ENCODE measurements at regions of chr1 and their contacts with region 1.

Region 1: GRCh38 chr1:182169203-182169602 is 107.7 kb upstream of the ZNF648 start:
- DNase-seq: no peak
- H3K4me3 ChIP-seq: no peak overlapping the region
- CTCF ChIP-seq: no peak
- POLR2A ChIP-seq: no peak

Region 2: DNA sequence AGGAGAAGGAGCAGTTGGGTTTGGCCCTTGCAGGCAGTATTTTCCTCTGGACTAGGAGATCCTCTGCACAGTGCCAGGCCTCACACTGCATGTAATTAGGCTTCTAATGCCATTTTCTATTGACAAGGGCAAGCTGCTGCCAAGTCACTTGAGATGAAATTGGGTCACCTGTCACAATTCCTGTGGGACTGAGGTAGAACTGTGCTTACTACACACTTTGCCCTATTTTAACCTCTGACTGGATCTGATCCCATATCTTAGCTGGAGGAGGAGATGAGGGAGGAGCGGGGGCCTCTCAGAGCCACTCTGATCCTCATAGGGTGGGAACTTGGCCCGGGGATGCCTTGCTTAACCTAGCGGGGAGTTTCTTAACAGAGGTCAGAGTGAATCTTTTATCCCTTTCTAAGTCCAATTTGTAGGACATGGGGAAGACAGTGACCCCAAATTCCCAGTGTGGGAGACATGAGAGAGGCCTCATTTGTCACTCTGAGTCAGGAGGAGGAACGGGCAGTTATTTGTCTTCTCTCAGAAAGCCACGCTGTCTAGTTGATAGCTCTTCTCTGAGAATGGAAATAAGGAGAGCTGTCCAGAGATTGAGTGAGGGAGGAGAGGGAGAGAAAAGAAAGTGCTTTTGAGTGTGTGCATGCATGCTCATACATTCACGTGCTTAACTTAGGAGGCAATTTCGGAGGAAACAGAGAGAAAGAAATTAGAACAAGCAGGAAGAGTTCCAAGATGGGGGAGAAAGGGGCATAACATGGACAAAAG is 564.5 kb before region 1 on chr1:
- intact Hi-C with region 1: no loop called
- DNase-seq: no peak
- H3K4me3 ChIP-seq: no peak overlapping the region
- CTCF ChIP-seq: no peak
- POLR2A ChIP-seq: no peak

Region 3: DNA sequence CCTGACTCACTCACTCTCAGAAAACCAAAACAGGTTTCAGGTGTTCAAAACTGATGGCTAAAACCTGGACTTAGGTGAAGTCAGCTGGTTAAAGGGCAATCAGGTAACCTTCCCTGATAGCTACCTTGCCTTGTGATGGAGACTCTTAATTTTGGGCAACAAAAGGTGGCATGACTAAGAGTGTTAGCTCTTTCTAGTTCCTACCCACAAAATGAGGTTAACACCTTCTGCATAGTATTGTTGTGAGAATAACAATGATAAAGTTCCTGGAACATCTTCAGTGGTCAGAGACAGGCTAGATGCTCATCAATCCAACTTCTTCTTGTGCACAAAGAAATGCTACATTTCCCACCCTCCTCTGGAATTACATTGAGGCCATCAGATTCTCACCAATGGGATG is 322.5 kb before region 1 on chr1:
- intact Hi-C with region 1: no loop called
- DNase-seq: no peak
- H3K4me3 ChIP-seq: no peak overlapping the region
- CTCF ChIP-seq: no peak
- POLR2A ChIP-seq: no peak

Region 4: GRCh38 chr1:182206626-182207239 is 37.5 kb after region 1 on chr1:
- intact Hi-C with region 1: loop called (anchors 1 kb)
- DNase-seq: peak; percentile 82 to 94
- H3K4me3 ChIP-seq: no peak overlapping the region
- CTCF ChIP-seq: no peak
- POLR2A ChIP-seq: no peak

Measured in lower leg skin (tissue), 4 donors.